K562 (cell line): ENCODE measurements at regions of chr18 and their contacts with region 1.

Region 1: DNA sequence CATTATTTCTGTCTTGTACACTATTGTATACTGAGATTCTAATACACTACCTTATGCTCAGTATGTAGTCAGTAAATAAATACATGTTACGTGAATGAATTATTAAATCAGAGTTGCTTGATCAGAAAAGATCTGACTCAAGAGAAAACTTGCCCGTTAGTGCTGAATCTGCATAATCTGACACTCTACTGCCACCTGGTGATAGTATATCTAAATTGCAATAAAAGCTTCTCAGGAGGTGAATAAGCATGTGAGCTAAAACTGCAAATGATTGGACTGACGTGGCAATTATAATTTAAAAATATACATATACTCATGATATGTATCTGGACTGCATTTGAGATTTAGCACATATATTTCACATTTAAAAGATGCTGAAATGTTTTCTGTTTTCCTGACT is 70.4 kb downstream of the KIAA1328 start:
- DNase-seq: peak; percentile 46 to 64 (median 52)
- ATAC-seq: 0 out of 3 replicates have a peak, but pooled peaks have one; percentile 31
- H3K4me3 ChIP-seq: no peak overlapping the region
- H3K27ac ChIP-seq: no peak overlapping the region
- H3K4me1 ChIP-seq: peaks cover 4 to 22% of the 10 kb centered on the region in 2 experiments; a peak in 3 of 5 replicates
- H3K27me3 ChIP-seq: no peaks in the 10 kb centered on the region
- CTCF ChIP-seq: peak; percentile 36 to 68 (median 62)
- EP300 ChIP-seq: no peak
- POLR2A ChIP-seq: no peak
- RAD21 ChIP-seq: peak; percentile 38 to 66; a peak in 3 of 4 replicates

Region 2: DNA sequence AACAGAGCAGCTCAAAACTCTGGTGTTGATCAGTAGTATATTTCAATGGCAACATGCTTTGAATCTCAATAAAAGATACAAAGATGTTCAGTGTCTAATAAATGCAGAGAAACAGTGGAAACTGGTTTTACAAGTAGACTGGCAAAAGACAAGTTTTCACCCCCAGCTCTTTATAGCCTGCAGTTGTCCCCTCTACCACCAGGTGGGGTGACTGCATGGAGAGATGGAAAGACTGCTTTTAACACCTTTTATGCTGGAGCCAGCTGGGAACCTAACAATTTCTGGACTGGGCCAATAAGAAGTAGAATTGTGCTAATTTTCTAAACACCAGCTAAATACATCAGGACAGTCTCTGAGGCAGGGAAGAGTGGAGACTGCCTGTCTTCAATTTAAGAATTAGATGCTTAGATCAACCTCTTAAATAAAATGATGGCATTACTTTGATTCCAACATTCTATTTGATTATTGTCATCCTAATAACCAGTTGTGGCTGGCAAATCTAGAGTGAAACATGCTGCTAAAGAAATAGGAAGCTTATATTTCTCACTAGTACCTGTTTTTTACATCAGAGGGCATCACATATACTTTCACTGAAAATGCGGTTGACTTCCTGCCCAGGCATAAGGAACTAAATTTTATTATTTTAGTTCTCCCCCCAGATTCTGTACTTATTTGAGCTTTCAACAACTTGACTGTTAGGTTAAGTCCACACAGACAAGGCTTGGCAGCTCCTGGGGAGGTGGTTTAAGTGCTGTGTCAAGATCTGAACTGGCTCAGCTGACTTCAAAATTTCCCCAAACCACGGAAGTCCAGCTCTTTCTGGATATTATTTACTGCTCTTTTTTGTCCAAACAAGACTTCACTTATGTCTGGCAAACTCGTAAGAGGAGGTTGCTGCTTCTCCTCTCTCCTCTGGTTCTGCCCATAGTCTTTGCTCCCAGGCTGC is 211.0 kb before region 1 on chr18:
- CTCF ChIA-PET with region 1: interaction called, 7 read pairs
- POLR2A ChIA-PET with region 1: no interaction called
- in situ Hi-C with region 1: no loop called
- intact Hi-C with region 1: loop called (anchors 5 kb)
- DNase-seq: peak; percentile 74 to 79 (median 78)
- ATAC-seq: peak; percentile 93
- H3K4me3 ChIP-seq: no peak overlapping the region
- H3K27ac ChIP-seq: no peak overlapping the region
- H3K4me1 ChIP-seq: no peaks in the 10 kb centered on the region
- H3K27me3 ChIP-seq: peaks cover 0 to 11% of the 10 kb centered on the region in 2 experiments; a peak in 3 of 5 replicates
- CTCF ChIP-seq: peak; percentile 82 to 91 (median 83)
- EP300 ChIP-seq: no peak
- POLR2A ChIP-seq: no peak
- RAD21 ChIP-seq: peak; percentile 57 to 83

Region 3: DNA sequence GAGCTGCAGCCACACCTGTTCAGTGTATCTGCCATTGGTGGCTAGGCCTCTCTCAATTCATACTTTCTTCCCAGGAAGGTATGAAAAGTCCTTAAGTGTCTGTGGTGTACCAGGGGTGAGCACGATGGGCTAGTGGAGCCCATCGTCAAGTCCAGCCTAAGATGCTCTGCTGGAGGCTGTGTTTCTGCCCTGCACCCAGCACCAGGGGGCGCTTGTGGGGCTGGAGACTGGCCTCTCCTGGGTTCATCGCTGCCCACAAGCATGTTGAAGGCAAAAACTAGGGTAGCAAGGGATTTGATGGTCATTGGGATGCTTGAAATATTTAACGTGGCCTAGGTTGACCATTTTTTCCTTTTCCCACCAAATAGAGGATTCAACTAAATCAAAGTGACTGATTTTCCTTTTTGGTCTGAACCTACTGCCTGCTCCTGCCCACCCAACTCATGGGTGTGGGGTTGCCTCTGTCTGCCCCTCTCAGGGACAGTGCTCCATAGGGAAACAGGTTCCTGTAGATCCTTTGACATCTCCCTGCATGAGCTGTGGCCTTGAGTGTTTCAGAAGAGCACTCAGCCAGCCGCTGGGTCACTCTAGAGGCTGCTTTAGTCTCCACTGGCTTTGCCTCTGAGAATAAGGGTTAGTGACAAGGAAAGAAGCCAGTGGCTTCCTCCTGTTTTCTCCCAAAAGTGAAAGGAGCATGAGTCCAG is 129.5 kb before region 1 on chr18:
- CTCF ChIA-PET with region 1: no interaction called
- POLR2A ChIA-PET with region 1: no interaction called
- in situ Hi-C with region 1: no loop called
- intact Hi-C with region 1: loop called (anchors 1 kb)
- DNase-seq: peak; percentile 58 to 74 (median 66)
- ATAC-seq: peak; percentile 93
- H3K4me3 ChIP-seq: no peak overlapping the region
- H3K27ac ChIP-seq: no peak overlapping the region
- H3K4me1 ChIP-seq: no peaks in the 10 kb centered on the region
- H3K27me3 ChIP-seq: peaks cover 19 to 21% of the 10 kb centered on the region in 2 experiments; a peak in 4 of 5 replicates
- CTCF ChIP-seq: peak; percentile 78 to 89 (median 81)
- EP300 ChIP-seq: no peak
- POLR2A ChIP-seq: no peak
- RAD21 ChIP-seq: peak in 1 of 2 experiments; percentile 65; a peak in 2 of 4 replicates

Region 4: GRCh38 chr18:36828630-36829361 is 70.5 kb before region 1 on chr18 and contains the starts of genes KIAA1328 and TPGS2:
- CTCF ChIA-PET with region 1: interaction called, 3 read pairs
- POLR2A ChIA-PET with region 1: interaction called, 6 read pairs
- in situ Hi-C with region 1: no loop called
- intact Hi-C with region 1: loop called (anchors 5 kb)
- DNase-seq: peak; percentile 94 to 96 (median 96)
- ATAC-seq: peak; percentile 94
- H3K4me3 ChIP-seq: peak within 1 kb of the TSS; percentile 95
- H3K27ac ChIP-seq: peak within 1 kb of the TSS; percentile 87
- H3K4me1 ChIP-seq: peaks cover 3 to 24% of the 10 kb centered on the region in 2 experiments; a peak in 3 of 5 replicates
- H3K27me3 ChIP-seq: no peaks in the 10 kb centered on the region; a peak in 1 of 5 replicates
- CTCF ChIP-seq: peak; percentile 68 to 85 (median 85)
- EP300 ChIP-seq: no peak; the same call in 1 of the 2 replicates
- POLR2A ChIP-seq: peak; percentile 80
- RAD21 ChIP-seq: peak; percentile 62 to 74
- polyA plus RNA-seq, gene KIAA1328: 4.8 to 5.1 TPM
- polyA plus RNA-seq, gene TPGS2: 94.2 to 113 TPM